ENCODE measurements at regions of chr15 and their contacts with region 1.

Region 1: GRCh38 chr15:34209421-34210282 is at the start of gene KATNBL1:
- DNase-seq: peak; percentile 98
- ATAC-seq: peak; percentile 99 to 100
- H3K4me3 ChIP-seq: peak within 1 kb of the TSS; percentile 62
- H3K27ac ChIP-seq: peak within 1 kb of the TSS; percentile 82
- H3K4me1 ChIP-seq: peaks cover 11% of the 10 kb centered on the region
- H3K27me3 ChIP-seq: no peaks in the 10 kb centered on the region
- CTCF ChIP-seq: peak; percentile 85
- total RNA-seq, gene KATNBL1: 44.1 TPM

Region 2: DNA sequence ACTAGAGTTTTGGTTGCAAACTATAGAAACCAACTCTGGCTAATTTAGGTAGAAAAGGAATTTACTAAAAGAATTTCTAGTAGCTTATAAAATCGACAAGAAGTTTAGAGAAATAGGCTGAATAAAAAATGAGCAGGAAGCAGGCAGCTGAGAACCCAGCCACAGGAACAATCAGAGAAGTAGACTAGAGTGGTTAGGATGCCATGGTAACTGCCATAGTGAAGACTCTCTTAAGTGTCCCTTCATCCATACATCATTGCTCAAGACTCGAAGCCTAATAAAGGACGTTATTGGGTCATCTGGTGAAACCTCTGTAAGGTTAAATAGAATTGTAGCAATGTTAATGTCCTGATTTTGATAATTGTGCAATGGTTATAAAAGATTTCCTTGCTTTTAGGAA is 184.4 kb before region 1 on chr15:
- intact Hi-C with region 1: no loop called
- DNase-seq: no peak
- ATAC-seq: no peak
- H3K4me3 ChIP-seq: no peak overlapping the region
- H3K27ac ChIP-seq: no peak overlapping the region
- H3K4me1 ChIP-seq: no peaks in the 10 kb centered on the region
- H3K27me3 ChIP-seq: no peaks in the 10 kb centered on the region
- CTCF ChIP-seq: no peak

Region 3: DNA sequence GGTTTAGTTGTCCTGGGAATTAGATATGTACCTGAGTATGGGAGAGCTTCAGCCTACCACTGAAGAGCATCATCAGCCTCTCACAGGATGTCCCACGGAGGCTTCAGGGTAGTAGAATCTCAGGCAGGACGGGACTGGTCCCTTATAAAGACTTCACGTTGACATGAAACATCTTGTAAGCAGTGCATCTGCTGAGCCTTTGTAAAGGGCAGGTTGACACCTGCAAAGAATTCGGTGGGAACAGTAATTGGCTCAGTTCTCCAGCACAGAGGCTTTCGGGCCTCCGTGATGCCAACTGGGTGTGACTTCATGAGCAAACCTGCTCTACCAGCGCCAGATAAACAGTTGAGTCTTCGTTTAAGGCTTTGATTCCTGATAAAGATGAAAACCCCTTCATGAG is 143.7 kb before region 1 on chr15:
- intact Hi-C with region 1: loop called (anchors 10 kb)
- DNase-seq: no peak
- ATAC-seq: no peak
- H3K4me3 ChIP-seq: no peak overlapping the region
- H3K27ac ChIP-seq: no peak overlapping the region
- H3K4me1 ChIP-seq: no peaks in the 10 kb centered on the region
- H3K27me3 ChIP-seq: no peaks in the 10 kb centered on the region
- CTCF ChIP-seq: no peak

Region 4: GRCh38 chr15:34481370-34481769 is 271.7 kb after region 1 on chr15:
- intact Hi-C with region 1: no loop called
- DNase-seq: no peak
- ATAC-seq: no peak
- H3K4me3 ChIP-seq: no peak overlapping the region
- H3K27ac ChIP-seq: no peak overlapping the region
- H3K4me1 ChIP-seq: no peaks in the 10 kb centered on the region
- H3K27me3 ChIP-seq: no peaks in the 10 kb centered on the region
- CTCF ChIP-seq: no peak

Measured in lower lobe of right lung (tissue), 2 donors.